ENCODE measurements at regions of chr15 and their contacts with region 1.

Region 1: GRCh38 chr15:38050529-38051448 is 116.3 kb downstream of the TMCO5A start:
- DNase-seq: no peak
- H3K4me3 ChIP-seq: no peak overlapping the region
- H3K27ac ChIP-seq: peak overlapping the region in 2 of 4 donors; percentile 4 to 32
- H3K4me1 ChIP-seq: no peaks in the 10 kb centered on the region
- H3K27me3 ChIP-seq: no peaks in the 10 kb centered on the region
- CTCF ChIP-seq: no peak
- EP300 ChIP-seq: no peak
- POLR2A ChIP-seq: no peak

Region 2: DNA sequence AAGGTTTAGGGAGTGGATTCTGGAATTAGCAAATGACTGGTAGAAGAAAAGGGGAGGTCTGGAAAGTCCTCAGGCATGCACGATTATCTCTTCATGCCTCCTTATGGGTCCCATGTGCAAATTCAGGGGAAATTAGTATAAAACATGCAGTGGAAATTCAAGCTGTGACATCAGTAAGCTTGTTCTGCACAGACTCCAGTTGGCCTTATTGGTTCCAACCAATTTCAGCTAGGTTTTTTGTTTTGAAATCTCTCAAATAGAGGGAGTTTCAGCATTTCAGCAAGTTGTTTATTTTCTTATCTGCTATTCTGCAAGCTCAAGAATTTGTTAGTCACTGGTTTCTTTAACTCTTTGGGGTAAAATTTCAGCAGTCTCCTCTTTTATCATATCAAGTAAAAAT is 117.1 kb before region 1 on chr15:
- intact Hi-C with region 1: no loop called
- DNase-seq: no peak
- H3K4me3 ChIP-seq: no peak overlapping the region
- H3K27ac ChIP-seq: no peak overlapping the region
- H3K4me1 ChIP-seq: no peaks in the 10 kb centered on the region
- H3K27me3 ChIP-seq: no peaks in the 10 kb centered on the region
- CTCF ChIP-seq: no peak
- EP300 ChIP-seq: no peak
- POLR2A ChIP-seq: no peak

Region 3: GRCh38 chr15:38002883-38003477 is 47.8 kb before region 1 on chr15:
- intact Hi-C with region 1: loop called (anchors 5 kb)
- DNase-seq: no peak
- H3K4me3 ChIP-seq: no peak overlapping the region
- H3K27ac ChIP-seq: no peak overlapping the region
- H3K4me1 ChIP-seq: no peaks in the 10 kb centered on the region
- H3K27me3 ChIP-seq: no peaks in the 10 kb centered on the region
- CTCF ChIP-seq: peak in 2 of 4 experiments; percentile 20 to 35
- EP300 ChIP-seq: no peak
- POLR2A ChIP-seq: no peak